ENCODE measurements at regions of chr4 and their contacts with region 1.

Region 1: GRCh38 chr4:147160908-147161513 is 215.3 kb upstream of the TTC29 start:
- DNase-seq: peak; percentile 16
- H3K4me3 ChIP-seq: no peak overlapping the region
- H3K27ac ChIP-seq: no peak overlapping the region
- H3K27me3 ChIP-seq: no peaks in the 10 kb centered on the region
- CTCF ChIP-seq: peak; percentile 89

Region 2: GRCh38 chr4:147034372-147034771 is 126.6 kb before region 1 on chr4:
- CTCF ChIA-PET with region 1: no interaction called
- POLR2A ChIA-PET with region 1: no interaction called
- DNase-seq: no peak
- H3K4me3 ChIP-seq: no peak overlapping the region
- H3K27ac ChIP-seq: no peak overlapping the region
- H3K27me3 ChIP-seq: peaks cover 8% of the 10 kb centered on the region
- CTCF ChIP-seq: no peak

Region 3: GRCh38 chr4:147173322-147173721 is 12.3 kb after region 1 on chr4:
- CTCF ChIA-PET with region 1: interaction called, 27 read pairs
- POLR2A ChIA-PET with region 1: no interaction called
- DNase-seq: no peak
- H3K4me3 ChIP-seq: no peak overlapping the region
- H3K27ac ChIP-seq: no peak overlapping the region
- H3K27me3 ChIP-seq: no peaks in the 10 kb centered on the region
- CTCF ChIP-seq: no peak

Region 4: GRCh38 chr4:147182041-147182440 is 21.0 kb after region 1 on chr4:
- CTCF ChIA-PET with region 1: interaction called, 18 read pairs
- POLR2A ChIA-PET with region 1: no interaction called
- DNase-seq: no peak
- H3K4me3 ChIP-seq: no peak overlapping the region
- H3K27ac ChIP-seq: no peak overlapping the region
- H3K27me3 ChIP-seq: no peaks in the 10 kb centered on the region
- CTCF ChIP-seq: no peak

Region 5: GRCh38 chr4:147361726-147362125 is 200.7 kb after region 1 on chr4:
- CTCF ChIA-PET with region 1: interaction called, 17 read pairs
- POLR2A ChIA-PET with region 1: interaction called, 4 read pairs
- DNase-seq: peak; percentile 64
- H3K4me3 ChIP-seq: no peak overlapping the region
- H3K27ac ChIP-seq: peak overlapping the region; percentile 93
- H3K27me3 ChIP-seq: no peaks in the 10 kb centered on the region
- CTCF ChIP-seq: no peak

Region 6: DNA sequence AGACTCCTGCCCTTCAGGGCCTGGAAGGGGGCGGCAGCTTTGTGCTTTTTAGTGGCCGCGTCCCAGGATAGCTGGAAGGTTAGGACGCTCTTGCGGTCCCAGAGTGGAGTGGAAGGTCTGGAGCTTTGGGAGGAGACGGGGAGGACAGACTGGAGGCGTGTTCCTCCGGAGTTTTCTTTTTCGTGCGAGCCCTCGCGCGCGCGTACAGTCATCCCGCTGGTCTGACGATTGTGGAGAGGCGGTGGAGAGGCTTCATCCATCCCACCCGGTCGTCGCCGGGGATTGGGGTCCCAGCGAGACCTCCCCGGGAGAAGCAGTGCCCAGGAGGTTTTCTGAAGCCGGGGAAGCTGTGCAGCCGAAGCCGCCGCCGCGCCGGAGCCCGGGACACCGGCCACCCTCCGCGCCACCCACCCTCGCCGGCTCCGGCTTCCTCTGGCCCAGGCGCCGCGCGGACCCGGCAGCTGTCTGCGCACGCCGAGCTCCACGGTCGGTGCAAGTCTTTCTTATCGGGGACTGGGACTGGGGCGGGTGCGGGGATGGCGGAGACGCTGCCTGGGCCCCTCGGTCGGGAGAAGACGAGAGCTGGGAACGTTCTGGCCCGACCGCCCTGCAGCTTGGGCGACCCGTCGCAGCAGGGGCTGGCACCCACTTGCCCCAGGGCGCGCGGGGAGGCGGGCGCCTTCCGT is 320.0 kb after region 1 on chr4 and contains the start of gene EDNRA:
- CTCF ChIA-PET with region 1: interaction called, 10 read pairs
- POLR2A ChIA-PET with region 1: no interaction called
- DNase-seq: no peak
- H3K4me3 ChIP-seq: peak within 1 kb of the TSS; percentile 74
- H3K27ac ChIP-seq: peak within 1 kb of the TSS; percentile 55
- H3K27me3 ChIP-seq: no peaks in the 10 kb centered on the region
- CTCF ChIP-seq: no peak
- polyA plus RNA-seq, gene EDNRA: 28.4 and 38.4 TPM in 2 replicates

Region 7: GRCh38 chr4:148025981-148026380 is 865.0 kb after region 1 on chr4:
- CTCF ChIA-PET with region 1: no interaction called
- POLR2A ChIA-PET with region 1: no interaction called
- DNase-seq: peak; percentile 41
- H3K4me3 ChIP-seq: no peak overlapping the region
- H3K27ac ChIP-seq: no peak overlapping the region
- H3K27me3 ChIP-seq: no peaks in the 10 kb centered on the region
- CTCF ChIP-seq: no peak

Measured in AG04450 (cell line).